Endothelial cell of umbilical vein (primary cell): ENCODE measurements at regions of chr1 and their contacts with region 1.

Region 1: DNA sequence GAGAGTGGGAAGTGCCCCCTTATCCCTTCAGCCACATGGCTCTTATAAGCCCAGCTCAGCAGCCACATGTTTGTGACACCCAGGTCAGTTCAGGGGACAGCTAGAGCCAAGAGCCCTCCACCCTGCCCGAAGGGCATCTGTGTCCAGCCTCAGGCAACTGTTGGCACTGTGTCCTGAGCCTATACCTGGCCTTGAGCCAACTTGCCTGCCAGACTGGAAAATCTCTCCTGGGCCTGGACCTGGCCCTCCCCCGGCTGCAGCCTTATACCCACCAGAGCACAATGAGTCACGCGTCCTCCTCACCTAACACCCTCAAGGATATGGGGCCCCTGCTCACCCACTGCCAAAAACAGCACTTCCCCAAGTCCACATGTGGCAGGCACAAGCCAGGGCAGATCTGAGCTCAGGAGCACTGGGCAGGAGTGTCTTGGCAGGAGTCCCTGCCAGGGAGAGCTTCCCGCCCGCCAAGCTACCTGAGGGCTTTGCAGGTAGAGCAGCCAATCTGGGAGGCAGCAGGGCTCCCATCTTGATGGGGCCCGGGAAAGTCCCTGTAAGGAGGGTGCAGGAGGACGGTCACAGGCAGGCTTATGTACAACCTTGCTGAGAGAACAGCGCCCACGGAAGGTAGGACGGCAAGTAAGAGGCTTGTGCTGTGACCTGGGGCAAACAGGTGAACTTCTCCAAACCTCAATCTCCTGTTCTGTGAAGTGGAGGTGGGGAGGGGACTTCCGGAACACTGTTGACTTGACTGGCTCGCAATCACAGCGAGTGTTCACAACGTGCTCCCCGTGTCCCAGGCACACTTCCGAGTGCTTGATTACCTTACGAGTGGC is 19.8 kb upstream of the HSPG2 start:
- DNase-seq: peak; percentile 89
- H3K4me3 ChIP-seq: no peak overlapping the region
- H3K27ac ChIP-seq: peak overlapping the region; percentile 80
- H3K4me1 ChIP-seq: peaks cover 41% of the 10 kb centered on the region
- H3K27me3 ChIP-seq: no peaks in the 10 kb centered on the region
- CTCF ChIP-seq: no peak
- POLR2A ChIP-seq: no peak

Region 2: GRCh38 chr1:21232044-21232443 is 724.9 kb before region 1 on chr1:
- CTCF ChIA-PET with region 1: no interaction called
- POLR2A ChIA-PET with region 1: no interaction called
- dilution Hi-C with region 1: no loop called
- intact Hi-C with region 1: no loop called
- DNase-seq: peak; percentile 67
- H3K4me3 ChIP-seq: no peak overlapping the region
- H3K27ac ChIP-seq: no peak overlapping the region
- H3K4me1 ChIP-seq: no peaks in the 10 kb centered on the region
- H3K27me3 ChIP-seq: no peaks in the 10 kb centered on the region
- CTCF ChIP-seq: peak; percentile 68 to 73
- POLR2A ChIP-seq: no peak

Region 3: GRCh38 chr1:21659099-21659923 is 297.6 kb before region 1 on chr1:
- CTCF ChIA-PET with region 1: no interaction called
- POLR2A ChIA-PET with region 1: no interaction called
- dilution Hi-C with region 1: no loop called
- intact Hi-C with region 1: no loop called
- DNase-seq: peak; percentile 70
- H3K4me3 ChIP-seq: no peak overlapping the region
- H3K27ac ChIP-seq: no peak overlapping the region
- H3K4me1 ChIP-seq: no peaks in the 10 kb centered on the region
- H3K27me3 ChIP-seq: peaks cover 7% of the 10 kb centered on the region in 2 experiments
- CTCF ChIP-seq: peak; percentile 87 to 92
- POLR2A ChIP-seq: no peak

Region 4: DNA sequence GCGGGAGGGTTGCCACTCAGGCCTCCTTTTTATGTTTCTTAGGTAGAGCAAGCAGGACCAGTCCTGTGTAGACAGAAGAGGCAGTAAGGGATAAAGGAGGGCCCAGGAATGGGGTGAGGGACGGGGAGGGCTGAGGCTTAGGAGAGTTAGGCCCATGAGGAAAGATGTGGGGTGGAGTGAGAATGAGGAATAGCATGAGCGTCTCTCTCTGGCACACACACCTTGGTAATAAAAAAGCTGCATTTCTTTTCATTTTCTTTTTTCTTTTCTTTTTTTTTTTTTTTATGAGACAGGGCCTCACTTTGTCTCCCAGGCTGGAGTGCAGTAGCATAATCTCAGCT is 12.2 kb before region 1 on chr1:
- CTCF ChIA-PET with region 1: interaction called, 39 read pairs
- POLR2A ChIA-PET with region 1: interaction called, 5 read pairs
- dilution Hi-C with region 1: no loop called
- intact Hi-C with region 1: loop called (anchors 1 kb)
- DNase-seq: no peak
- H3K4me3 ChIP-seq: no peak overlapping the region
- H3K27ac ChIP-seq: peak overlapping the region; percentile 92
- H3K4me1 ChIP-seq: peaks cover 47% of the 10 kb centered on the region
- H3K27me3 ChIP-seq: no peaks in the 10 kb centered on the region
- CTCF ChIP-seq: no peak
- POLR2A ChIP-seq: no peak